MCF 10A (cell line): ENCODE measurements at regions of chr6 and their contacts with region 1.

Region 1: GRCh38 chr6:122751326-122751725 is 28.2 kb upstream of the FABP7 start:
- DNase-seq: no peak
- H3K4me3 Mint-ChIP-seq: no peak overlapping the region
- H3K27ac Mint-ChIP-seq: no peak overlapping the region
- H3K4me1 Mint-ChIP-seq: no peaks in the 10 kb centered on the region
- H3K27me3 Mint-ChIP-seq: no peaks in the 10 kb centered on the region
- CTCF ChIP-seq: no peak

Region 2: DNA sequence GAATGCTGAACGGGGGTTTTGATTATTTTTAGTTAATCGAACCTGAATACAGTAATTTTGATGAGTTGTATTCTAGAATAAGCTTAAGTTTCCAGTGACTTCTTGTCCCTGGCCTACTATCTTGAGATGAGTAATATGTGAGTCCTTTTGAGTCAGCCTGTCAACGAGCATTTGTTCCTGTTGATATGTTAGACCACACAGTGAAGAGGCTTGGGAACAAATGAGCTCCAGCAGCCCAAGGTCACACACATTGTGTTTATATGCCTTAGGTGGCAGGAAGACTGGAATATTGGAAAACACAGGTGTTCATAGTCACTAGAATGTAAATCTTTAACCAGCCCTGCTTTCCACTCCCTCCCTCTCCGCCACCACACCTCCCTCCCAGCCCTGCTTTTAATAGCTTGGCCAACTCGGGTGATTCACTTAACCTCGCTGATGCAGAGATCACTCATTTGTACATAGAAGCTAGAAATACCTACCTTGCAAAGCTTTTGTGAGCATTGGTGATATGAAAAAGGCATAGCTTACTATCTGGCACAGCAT is 46.8 kb after region 1 on chr6:
- CTCF ChIA-PET with region 1: interaction called, 37 read pairs
- POLR2A ChIA-PET with region 1: interaction called, 3 read pairs
- intact Hi-C with region 1: no loop called
- DNase-seq: peak; percentile 71
- H3K4me3 Mint-ChIP-seq: peak overlapping the region; percentile 32
- H3K27ac Mint-ChIP-seq: peak overlapping the region; percentile 69
- H3K4me1 Mint-ChIP-seq: peaks cover 14% of the 10 kb centered on the region
- H3K27me3 Mint-ChIP-seq: no peaks in the 10 kb centered on the region
- CTCF ChIP-seq: no peak